MCF 10A (cell line): ENCODE measurements at regions of chr9 and their contacts with region 1.

Region 1: DNA sequence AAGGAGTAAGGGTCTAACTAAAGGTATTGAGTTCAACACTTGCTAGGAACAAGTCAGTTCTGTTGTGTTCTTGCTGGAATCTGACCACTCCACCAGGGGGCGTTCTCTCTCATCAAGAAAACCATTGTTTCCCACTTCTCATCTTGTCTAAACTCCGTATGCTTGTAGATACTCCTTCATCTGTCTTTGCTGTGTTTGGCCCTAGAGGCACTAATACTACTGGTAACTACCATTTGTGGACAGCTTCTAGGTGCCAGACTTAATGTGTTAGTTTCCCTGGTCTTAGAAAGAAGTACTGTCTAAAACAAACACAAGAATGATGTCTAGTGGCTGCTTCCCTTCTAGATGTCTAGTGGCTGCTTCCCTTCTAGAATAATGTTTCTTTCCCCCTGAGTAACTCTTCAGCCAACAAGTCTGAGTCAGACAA is 18.7 kb upstream of the PTPDC1 start:
- DNase-seq: peak; percentile 91
- H3K4me3 Mint-ChIP-seq: no peak overlapping the region
- H3K27ac Mint-ChIP-seq: peak overlapping the region; percentile 71
- H3K4me1 Mint-ChIP-seq: peaks cover 10% of the 10 kb centered on the region
- H3K27me3 Mint-ChIP-seq: no peaks in the 10 kb centered on the region
- CTCF ChIP-seq: peak; percentile 71

Region 2: GRCh38 chr9:93697352-93698139 is 368.0 kb before region 1 on chr9:
- CTCF ChIA-PET with region 1: no interaction called
- POLR2A ChIA-PET with region 1: no interaction called
- intact Hi-C with region 1: no loop called
- DNase-seq: no peak
- H3K4me3 Mint-ChIP-seq: no peak overlapping the region
- H3K27ac Mint-ChIP-seq: no peak overlapping the region
- H3K4me1 Mint-ChIP-seq: no peaks in the 10 kb centered on the region
- H3K27me3 Mint-ChIP-seq: peaks cover 6% of the 10 kb centered on the region
- CTCF ChIP-seq: no peak

Region 3: GRCh38 chr9:93730217-93730616 is 335.3 kb before region 1 on chr9:
- CTCF ChIA-PET with region 1: no interaction called
- POLR2A ChIA-PET with region 1: no interaction called
- intact Hi-C with region 1: no loop called
- DNase-seq: no peak
- H3K4me3 Mint-ChIP-seq: no peak overlapping the region
- H3K27ac Mint-ChIP-seq: no peak overlapping the region
- H3K4me1 Mint-ChIP-seq: no peaks in the 10 kb centered on the region
- H3K27me3 Mint-ChIP-seq: peaks cover 10% of the 10 kb centered on the region
- CTCF ChIP-seq: no peak

Region 4: GRCh38 chr9:94084314-94084713 is 18.8 kb after region 1 on chr9 and contains the start of gene PTPDC1:
- CTCF ChIA-PET with region 1: interaction called, 14 read pairs
- POLR2A ChIA-PET with region 1: interaction called, 3 read pairs
- intact Hi-C with region 1: no loop called
- DNase-seq: peak; percentile 32
- H3K4me3 Mint-ChIP-seq: peak within 1 kb of the TSS; percentile 47
- H3K27ac Mint-ChIP-seq: peak within 1 kb of the TSS; percentile 85
- H3K4me1 Mint-ChIP-seq: peaks cover 23% of the 10 kb centered on the region
- H3K27me3 Mint-ChIP-seq: no peaks in the 10 kb centered on the region
- CTCF ChIP-seq: no peak
- total RNA-seq, gene PTPDC1: 42.2 and 49.9 TPM in 2 replicates

Region 5: GRCh38 chr9:94134629-94135028 is 69.1 kb after region 1 on chr9:
- CTCF ChIA-PET with region 1: interaction called, 11 read pairs
- POLR2A ChIA-PET with region 1: interaction called, 19 read pairs
- intact Hi-C with region 1: loop called (anchors 1 kb)
- DNase-seq: peak; percentile 22
- H3K4me3 Mint-ChIP-seq: peak overlapping the region; percentile 41
- H3K27ac Mint-ChIP-seq: peak overlapping the region; percentile 93
- H3K4me1 Mint-ChIP-seq: peaks cover 59% of the 10 kb centered on the region
- H3K27me3 Mint-ChIP-seq: no peaks in the 10 kb centered on the region
- CTCF ChIP-seq: no peak

Region 6: GRCh38 chr9:94166237-94166963 is 100.9 kb after region 1 on chr9:
- CTCF ChIA-PET with region 1: interaction called, 47 read pairs
- POLR2A ChIA-PET with region 1: interaction called, 21 read pairs
- intact Hi-C with region 1: loop called (anchors 1 kb)
- DNase-seq: peak; percentile 99
- H3K4me3 Mint-ChIP-seq: peak overlapping the region; percentile 83
- H3K27ac Mint-ChIP-seq: peak overlapping the region; percentile 86
- H3K4me1 Mint-ChIP-seq: peaks cover 22% of the 10 kb centered on the region
- H3K27me3 Mint-ChIP-seq: no peaks in the 10 kb centered on the region
- CTCF ChIP-seq: no peak

Region 7: DNA sequence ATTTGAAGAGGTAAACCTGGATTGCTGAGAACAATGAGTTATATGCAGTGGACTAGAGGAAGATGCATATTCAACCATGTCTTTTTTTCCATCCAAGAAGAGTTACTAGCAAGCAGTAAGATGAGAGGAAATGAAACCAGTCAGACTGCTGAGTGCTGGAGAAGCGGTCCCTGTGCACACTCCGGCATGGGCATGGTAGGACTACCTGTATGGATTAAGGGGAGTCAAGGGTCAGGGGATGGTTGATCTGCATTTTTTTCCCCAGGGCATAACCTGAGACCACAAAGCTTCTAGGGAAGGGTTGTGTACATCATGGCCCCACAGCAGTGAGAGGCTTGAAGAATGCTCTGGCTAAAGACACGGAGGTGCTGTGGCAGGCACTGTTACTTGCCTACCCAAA is 117.0 kb after region 1 on chr9:
- CTCF ChIA-PET with region 1: interaction called, 12 read pairs
- POLR2A ChIA-PET with region 1: interaction called, 22 read pairs
- intact Hi-C with region 1: no loop called
- DNase-seq: no peak
- H3K4me3 Mint-ChIP-seq: no peak overlapping the region
- H3K27ac Mint-ChIP-seq: peak overlapping the region; percentile 54
- H3K4me1 Mint-ChIP-seq: peaks cover 13% of the 10 kb centered on the region
- H3K27me3 Mint-ChIP-seq: no peaks in the 10 kb centered on the region
- CTCF ChIP-seq: no peak